Calu3 (cell line): ENCODE measurements at regions of chr16 and their contacts with region 1.

Region 1: GRCh38 chr16:31476303-31477219 is 4.6 kb downstream of the TGFB1I1 start:
- DNase-seq: peak; percentile 81
- H3K4me3 Mint-ChIP-seq: peak overlapping the region; percentile 67
- H3K27ac Mint-ChIP-seq: peak overlapping the region; percentile 43
- H3K4me1 Mint-ChIP-seq: peaks cover 26% of the 10 kb centered on the region
- H3K27me3 Mint-ChIP-seq: no peaks in the 10 kb centered on the region
- CTCF ChIP-seq: no peak

Region 2: GRCh38 chr16:31458844-31459721 is 17.5 kb before region 1 on chr16 and contains the start of gene ARMC5:
- CTCF ChIA-PET with region 1: interaction called, 24 read pairs
- intact Hi-C with region 1: loop called (anchors 2 kb)
- DNase-seq: peak; percentile 97
- H3K4me3 Mint-ChIP-seq: peak within 1 kb of the TSS; percentile 86
- H3K27ac Mint-ChIP-seq: peak within 1 kb of the TSS; percentile 93
- H3K4me1 Mint-ChIP-seq: peaks cover 18% of the 10 kb centered on the region
- H3K27me3 Mint-ChIP-seq: no peaks in the 10 kb centered on the region
- CTCF ChIP-seq: peak; percentile 58
- total RNA-seq, gene ARMC5: 13.2 and 13.6 TPM in 2 replicates

Region 3: DNA sequence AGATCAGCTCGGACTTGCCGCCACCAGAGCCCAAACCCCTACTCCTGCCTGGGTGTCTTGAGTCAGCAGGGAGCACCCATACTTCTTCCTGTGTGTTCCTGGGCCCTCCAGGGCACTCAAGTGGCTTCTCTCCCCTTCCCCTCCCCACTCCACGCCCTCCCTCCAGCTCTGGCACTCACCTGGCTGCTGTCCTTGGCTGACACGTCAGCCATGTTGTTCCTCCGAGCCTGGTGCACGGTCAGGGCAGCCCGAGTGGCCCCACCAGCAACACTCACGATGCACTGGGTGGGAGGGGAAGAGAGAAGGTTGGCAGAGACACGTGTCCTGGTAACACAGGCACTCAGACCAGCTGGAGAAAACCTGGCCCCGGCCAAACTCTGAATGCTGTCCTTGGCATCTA is 20.1 kb after region 1 on chr16:
- CTCF ChIA-PET with region 1: no interaction called
- intact Hi-C with region 1: loop called (anchors 1 kb)
- DNase-seq: no peak
- H3K4me3 Mint-ChIP-seq: no peak overlapping the region
- H3K27ac Mint-ChIP-seq: no peak overlapping the region
- H3K4me1 Mint-ChIP-seq: no peaks in the 10 kb centered on the region
- H3K27me3 Mint-ChIP-seq: no peaks in the 10 kb centered on the region
- CTCF ChIP-seq: no peak

Region 4: DNA sequence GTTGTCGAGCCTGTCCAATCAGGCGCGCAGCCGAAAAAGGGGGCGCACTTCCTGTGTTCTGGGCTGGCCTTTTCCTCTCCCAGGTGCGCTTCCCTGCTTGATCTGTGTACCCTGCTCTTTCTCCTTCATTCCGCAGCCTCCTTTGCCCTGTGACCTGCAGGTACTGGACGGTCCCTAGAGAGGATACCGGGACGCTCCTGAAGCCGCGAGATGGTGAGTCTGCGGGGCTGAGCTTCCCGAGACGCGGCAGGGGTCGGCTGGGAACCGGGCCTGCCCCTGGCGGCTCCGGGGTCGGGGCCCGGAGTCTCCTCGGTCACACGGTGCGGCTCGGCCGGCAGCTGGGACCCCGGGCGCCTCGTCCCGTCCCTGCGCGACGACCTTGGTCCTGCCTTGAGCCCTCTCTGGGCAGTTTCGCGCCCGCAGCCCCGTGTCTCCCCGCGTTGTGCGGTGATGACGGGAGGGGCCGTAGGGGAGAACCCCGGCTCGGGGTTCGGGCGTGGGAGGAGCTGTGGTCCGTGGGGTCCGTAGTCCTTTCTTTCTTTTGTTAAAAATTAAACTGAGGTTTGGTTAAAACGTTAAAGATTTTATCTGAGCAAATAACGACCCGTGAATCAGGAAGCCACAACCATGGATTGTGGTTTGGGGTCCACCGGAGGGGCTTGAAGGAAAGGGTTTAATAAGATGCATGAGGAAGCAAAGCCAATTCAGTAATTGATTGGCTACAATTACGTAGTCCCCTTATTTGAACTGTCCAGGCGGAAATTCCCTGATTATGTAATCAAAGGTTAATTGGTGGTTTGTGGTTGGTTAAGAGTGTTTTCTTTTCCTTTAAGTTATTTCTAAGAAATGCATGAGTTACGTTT is 224.2 kb after region 1 on chr16:
- CTCF ChIA-PET with region 1: no interaction called
- intact Hi-C with region 1: no loop called
- DNase-seq: peak; percentile 93
- H3K4me3 Mint-ChIP-seq: peak overlapping the region; percentile 82
- H3K27ac Mint-ChIP-seq: peak overlapping the region; percentile 83
- H3K4me1 Mint-ChIP-seq: peaks cover 18% of the 10 kb centered on the region
- H3K27me3 Mint-ChIP-seq: no peaks in the 10 kb centered on the region
- CTCF ChIP-seq: no peak